Left ventricle myocardium inferior (tissue), 1 donor: ENCODE measurements at regions of chr21 and their contacts with region 1.

Region 1: GRCh38 chr21:36141513-36141925 is 6.6 kb downstream of the CBR3 start:
- DNase-seq: peak; percentile 24
- H3K4me3 ChIP-seq: no peak overlapping the region
- H3K27ac ChIP-seq: no peak overlapping the region
- H3K4me1 ChIP-seq: peaks cover 22% of the 10 kb centered on the region
- H3K27me3 ChIP-seq: no peaks in the 10 kb centered on the region
- CTCF ChIP-seq: peak; percentile 90

Region 2: GRCh38 chr21:36209626-36210171 is 68.2 kb after region 1 on chr21:
- intact Hi-C with region 1: loop called (anchors 10 kb)
- DNase-seq: no peak
- H3K4me3 ChIP-seq: no peak overlapping the region
- H3K27ac ChIP-seq: no peak overlapping the region
- H3K4me1 ChIP-seq: peaks cover 7% of the 10 kb centered on the region
- H3K27me3 ChIP-seq: no peaks in the 10 kb centered on the region
- CTCF ChIP-seq: peak; percentile 63

Region 3: GRCh38 chr21:36319765-36320420 is 178.4 kb after region 1 on chr21 and contains the start of gene MORC3:
- intact Hi-C with region 1: loop called (anchors 10 kb)
- DNase-seq: peak; percentile 98
- H3K4me3 ChIP-seq: peak within 1 kb of the TSS; percentile 86
- H3K27ac ChIP-seq: peak within 1 kb of the TSS; percentile 95
- H3K4me1 ChIP-seq: peaks cover 52% of the 10 kb centered on the region
- H3K27me3 ChIP-seq: no peaks in the 10 kb centered on the region
- CTCF ChIP-seq: no peak
- total RNA-seq, gene MORC3: 19.4 TPM